CD8-positive, alpha-beta T cell (primary cell): ENCODE measurements at regions of chr3 and their contacts with region 1.

Region 1: DNA sequence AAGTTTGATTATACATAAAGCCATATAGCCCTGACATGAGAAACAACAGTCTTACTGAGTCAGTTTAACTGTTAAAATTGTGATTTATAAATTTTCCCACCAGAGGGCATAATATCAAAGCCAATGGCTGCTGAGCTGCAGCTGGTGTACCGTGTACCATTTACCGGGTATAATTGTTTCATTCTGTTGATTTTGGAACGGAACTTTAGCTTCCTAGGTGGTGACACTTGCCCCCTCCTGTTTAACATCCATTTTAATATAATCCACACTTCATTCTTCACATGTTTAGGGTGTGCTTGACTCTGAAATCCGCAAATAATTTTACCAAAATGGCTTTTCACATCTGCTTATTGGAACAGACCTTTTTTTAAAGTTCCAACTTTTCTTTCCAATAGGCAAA is 72.8 kb downstream of the SLC9A9 start:
- DNase-seq: peak in 2 of 9 experiments; percentile 38 to 59
- ATAC-seq: peak; percentile 69
- H3K4me3 ChIP-seq: no peak overlapping the region
- H3K4me3 Mint-ChIP-seq: no peak overlapping the region
- H3K27ac ChIP-seq: no peak overlapping the region
- H3K27ac Mint-ChIP-seq: no peak overlapping the region
- H3K4me1 ChIP-seq: no peaks in the 10 kb centered on the region
- H3K4me1 Mint-ChIP-seq: peaks cover 7% of the 10 kb centered on the region
- H3K27me3 ChIP-seq: no peaks in the 10 kb centered on the region
- H3K27me3 Mint-ChIP-seq: no peaks in the 10 kb centered on the region
- CTCF ChIP-seq: peak; percentile 59

Region 2: DNA sequence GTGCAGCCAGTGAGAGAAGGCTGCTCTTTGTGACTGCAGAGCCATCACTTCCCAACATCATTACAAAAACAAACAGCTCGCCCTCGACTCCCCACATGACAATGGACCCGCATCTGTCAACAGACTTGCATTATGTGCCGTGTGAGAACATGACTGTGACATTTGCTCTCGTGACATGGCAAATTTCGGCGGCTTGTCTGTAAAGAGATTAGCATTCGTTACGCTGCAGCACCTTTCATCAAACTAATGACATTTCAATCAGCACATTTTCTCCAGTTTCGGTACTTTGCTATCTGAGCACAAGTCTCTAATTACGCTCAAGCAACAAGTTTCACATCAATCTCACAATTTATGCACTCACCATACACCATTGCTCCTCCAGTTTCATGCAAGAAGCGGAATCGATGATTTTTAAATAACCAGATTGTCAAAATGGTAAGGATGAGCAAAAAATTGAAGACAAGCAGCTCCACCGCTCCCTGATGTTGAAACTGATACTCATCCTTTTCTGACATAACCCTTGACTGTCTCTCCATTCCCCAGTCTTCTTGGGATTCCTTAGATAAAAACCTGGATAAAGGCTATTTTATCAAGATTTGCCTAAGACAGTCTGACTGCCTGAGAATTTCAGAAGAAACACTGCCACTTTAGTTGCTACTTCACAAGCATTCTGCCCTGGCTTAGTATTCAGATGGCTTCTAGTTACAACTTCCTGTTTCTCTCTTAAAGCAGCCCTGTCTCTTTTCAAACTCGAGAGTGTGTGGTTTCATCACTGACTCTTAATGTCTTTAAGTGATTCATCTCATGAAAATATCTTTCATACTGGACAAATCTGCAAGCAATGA is 72.5 kb after region 1 on chr3 and contains the start of gene SLC9A9:
- CTCF ChIA-PET with region 1: interaction called, 3 read pairs
- POLR2A ChIA-PET with region 1: interaction called, 3 read pairs
- intact Hi-C with region 1: loop called in 1 of 2 experiments (anchors 1 kb)
- DNase-seq: peak in 8 of 9 experiments; percentile 7 to 65 (median 32)
- ATAC-seq: peak; percentile 87
- H3K4me3 ChIP-seq: peak within 1 kb of the TSS; percentile 57 to 74
- H3K4me3 Mint-ChIP-seq: peak within 1 kb of the TSS; percentile 96
- H3K27ac ChIP-seq: peak within 1 kb of the TSS; percentile 27 to 67
- H3K27ac Mint-ChIP-seq: peak within 1 kb of the TSS; percentile 91
- H3K4me1 ChIP-seq: peaks cover 24% of the 10 kb centered on the region
- H3K4me1 Mint-ChIP-seq: peaks cover 53% of the 10 kb centered on the region
- H3K27me3 ChIP-seq: no peaks in the 10 kb centered on the region
- H3K27me3 Mint-ChIP-seq: no peaks in the 10 kb centered on the region
- CTCF ChIP-seq: no peak
- total RNA-seq, gene SLC9A9: 6.8 to 7.5 TPM

Region 3: GRCh38 chr3:143951351-143951971 is 176.0 kb after region 1 on chr3:
- CTCF ChIA-PET with region 1: interaction called, 8 read pairs
- POLR2A ChIA-PET with region 1: no interaction called
- intact Hi-C with region 1: loop called (anchors 1 to 5 kb)
- DNase-seq: peak in 4 of 9 experiments; percentile 9 to 60 (median 38)
- ATAC-seq: no peak
- H3K4me3 ChIP-seq: no peak overlapping the region
- H3K4me3 Mint-ChIP-seq: no peak overlapping the region
- H3K27ac ChIP-seq: no peak overlapping the region
- H3K27ac Mint-ChIP-seq: no peak overlapping the region
- H3K4me1 ChIP-seq: no peaks in the 10 kb centered on the region
- H3K4me1 Mint-ChIP-seq: peaks cover 3% of the 10 kb centered on the region
- H3K27me3 ChIP-seq: no peaks in the 10 kb centered on the region
- H3K27me3 Mint-ChIP-seq: peaks cover 5% of the 10 kb centered on the region
- CTCF ChIP-seq: peak; percentile 67

Region 4: DNA sequence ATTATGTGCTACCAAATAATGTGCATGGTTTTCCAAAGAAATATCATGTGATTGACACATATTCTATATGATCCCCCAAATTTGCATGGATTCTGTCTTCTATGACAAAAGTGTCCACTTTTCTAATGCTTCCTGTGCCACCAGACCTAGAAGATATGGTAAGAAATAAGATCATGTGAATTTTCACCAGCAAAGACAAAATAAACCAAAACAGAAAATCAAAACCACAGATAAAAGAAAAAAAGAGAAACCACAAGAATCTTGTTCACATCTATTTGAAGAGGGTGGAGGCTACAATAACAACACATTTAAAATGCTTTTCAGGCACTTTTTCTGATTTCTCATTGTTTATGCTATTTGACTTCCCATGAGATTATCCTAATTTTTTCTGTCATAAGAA is 499.5 kb after region 1 on chr3:
- CTCF ChIA-PET with region 1: no interaction called
- POLR2A ChIA-PET with region 1: no interaction called
- intact Hi-C with region 1: loop called in 1 of 2 experiments (anchors 5 kb)
- DNase-seq: peak in 1 of 9 experiments; percentile 1
- ATAC-seq: no peak
- H3K4me3 ChIP-seq: no peak overlapping the region
- H3K4me3 Mint-ChIP-seq: no peak overlapping the region
- H3K27ac ChIP-seq: no peak overlapping the region
- H3K27ac Mint-ChIP-seq: no peak overlapping the region
- H3K4me1 ChIP-seq: no peaks in the 10 kb centered on the region
- H3K4me1 Mint-ChIP-seq: peaks cover 4% of the 10 kb centered on the region
- H3K27me3 ChIP-seq: no peaks in the 10 kb centered on the region
- H3K27me3 Mint-ChIP-seq: peaks cover 3% of the 10 kb centered on the region
- CTCF ChIP-seq: no peak